ENCODE measurements at regions of chr11 and their contacts with region 1.

Region 1: GRCh38 chr11:8566613-8567210 is 27.3 kb downstream of the STK33 start:
- DNase-seq: no peak
- H3K4me3 ChIP-seq: no peak overlapping the region
- H3K27ac ChIP-seq: no peak overlapping the region
- H3K4me1 ChIP-seq: peaks cover 0 to 9% (median 4%) of the 10 kb centered on the region in 4 donors
- H3K27me3 ChIP-seq: no peaks in the 10 kb centered on the region
- CTCF ChIP-seq: peak; percentile 64 to 77 (median 77)
- EP300 ChIP-seq: no peak
- POLR2A ChIP-seq: no peak

Region 2: DNA sequence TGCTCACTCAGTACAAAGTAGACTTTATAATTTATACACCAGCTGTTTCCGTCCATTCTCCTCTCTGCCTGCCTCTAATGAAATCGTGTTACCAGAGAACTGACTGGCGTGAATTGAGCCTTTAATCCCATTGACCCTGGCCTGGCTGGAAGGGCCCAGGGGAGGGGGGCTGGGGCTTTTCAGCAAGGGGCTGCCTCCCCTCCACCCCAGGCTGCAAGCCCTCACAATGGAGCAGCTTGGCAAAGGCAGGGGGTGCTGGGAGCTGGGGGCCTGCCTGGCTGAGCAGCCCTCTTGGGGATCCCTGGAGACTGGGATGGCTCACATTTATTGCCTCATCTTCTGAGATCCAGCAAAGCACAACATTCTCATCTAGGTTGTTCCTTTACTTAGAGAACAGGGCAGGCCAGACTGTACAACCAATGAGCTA is 277.2 kb before region 1 on chr11:
- intact Hi-C with region 1: no loop called
- DNase-seq: no peak
- H3K4me3 ChIP-seq: no peak overlapping the region
- H3K27ac ChIP-seq: no peak overlapping the region
- H3K4me1 ChIP-seq: peaks cover 4 to 9% (median 6%) of the 10 kb centered on the region in 4 donors
- H3K27me3 ChIP-seq: no peaks in the 10 kb centered on the region
- CTCF ChIP-seq: no peak
- EP300 ChIP-seq: no peak
- POLR2A ChIP-seq: no peak

Region 3: DNA sequence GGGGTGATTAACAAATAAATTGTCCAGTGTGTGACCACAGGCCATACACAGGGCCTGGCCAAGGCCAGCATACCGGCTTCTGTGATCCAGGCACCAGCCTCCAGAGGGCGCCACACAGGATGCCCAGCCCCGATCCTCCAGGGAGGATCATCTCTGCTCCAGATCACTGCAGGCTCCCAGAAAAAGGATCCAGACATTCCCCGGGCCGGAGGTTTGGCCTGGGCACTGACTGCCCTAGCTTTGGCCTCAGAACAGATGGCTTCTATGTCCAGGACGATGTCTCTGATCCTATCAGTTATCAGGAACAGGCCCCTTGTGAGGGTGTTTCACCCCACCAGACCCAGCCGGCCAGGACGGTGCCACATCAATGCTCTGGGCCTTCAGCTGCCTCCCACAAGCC is 228.6 kb before region 1 on chr11:
- intact Hi-C with region 1: loop called (anchors 2 kb)
- DNase-seq: no peak
- H3K4me3 ChIP-seq: no peak overlapping the region
- H3K27ac ChIP-seq: no peak overlapping the region
- H3K4me1 ChIP-seq: no peaks in the 10 kb centered on the region
- H3K27me3 ChIP-seq: no peaks in the 10 kb centered on the region
- CTCF ChIP-seq: peak; percentile 57 to 73 (median 58)
- EP300 ChIP-seq: no peak
- POLR2A ChIP-seq: no peak

Region 4: DNA sequence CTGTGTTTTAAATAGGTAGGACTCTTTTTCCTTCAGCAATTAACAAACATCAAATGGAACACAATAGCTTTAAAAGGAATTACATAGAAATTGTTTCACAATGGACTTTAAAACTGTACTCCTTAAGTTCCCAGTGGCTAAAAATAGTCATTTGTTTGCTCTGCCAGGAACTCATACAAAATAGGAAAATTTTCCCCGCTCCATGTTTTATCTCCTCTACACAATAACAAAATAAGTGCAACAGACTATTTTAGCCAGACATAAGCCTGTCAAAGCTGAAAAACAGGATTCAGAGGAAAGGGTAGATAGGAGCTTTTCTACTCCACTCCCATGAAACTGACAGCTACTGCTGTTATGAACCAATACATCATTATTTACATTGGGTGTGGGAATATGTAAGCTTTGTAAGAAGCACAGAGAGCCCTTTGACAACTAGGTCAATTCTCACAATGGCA is 62.8 kb before region 1 on chr11:
- intact Hi-C with region 1: no loop called
- DNase-seq: no peak
- H3K4me3 ChIP-seq: no peak overlapping the region
- H3K27ac ChIP-seq: peak overlapping the region in 3 of 4 donors; percentile 10 to 40 (median 28)
- H3K4me1 ChIP-seq: peaks cover 5 to 13% (median 9%) of the 10 kb centered on the region in 4 donors
- H3K27me3 ChIP-seq: no peaks in the 10 kb centered on the region
- CTCF ChIP-seq: no peak
- EP300 ChIP-seq: no peak
- POLR2A ChIP-seq: no peak

Measured in esophagus muscularis mucosa (tissue), 4 donors.